CD8-positive, alpha-beta T cell (primary cell): ENCODE measurements at regions of chr7 and their contacts with region 1.

Region 1: GRCh38 chr7:93476491-93477344 is 97.8 kb downstream of the CALCR start:
- DNase-seq: no peak
- ATAC-seq: no peak
- H3K4me3 ChIP-seq: no peak overlapping the region
- H3K4me3 Mint-ChIP-seq: no peak overlapping the region
- H3K27ac ChIP-seq: no peak overlapping the region
- H3K27ac Mint-ChIP-seq: no peak overlapping the region
- H3K4me1 ChIP-seq: no peaks in the 10 kb centered on the region
- H3K4me1 Mint-ChIP-seq: no peaks in the 10 kb centered on the region
- H3K27me3 ChIP-seq: no peaks in the 10 kb centered on the region
- H3K27me3 Mint-ChIP-seq: no peaks in the 10 kb centered on the region
- CTCF ChIP-seq: no peak

Region 2: GRCh38 chr7:93544691-93545090 is 68.0 kb after region 1 on chr7:
- CTCF ChIA-PET with region 1: no interaction called
- POLR2A ChIA-PET with region 1: no interaction called
- intact Hi-C with region 1: no loop called
- DNase-seq: no peak
- ATAC-seq: no peak
- H3K4me3 ChIP-seq: no peak overlapping the region
- H3K4me3 Mint-ChIP-seq: no peak overlapping the region
- H3K27ac ChIP-seq: no peak overlapping the region
- H3K27ac Mint-ChIP-seq: no peak overlapping the region
- H3K4me1 ChIP-seq: no peaks in the 10 kb centered on the region
- H3K4me1 Mint-ChIP-seq: no peaks in the 10 kb centered on the region
- H3K27me3 ChIP-seq: no peaks in the 10 kb centered on the region
- H3K27me3 Mint-ChIP-seq: no peaks in the 10 kb centered on the region
- CTCF ChIP-seq: no peak

Region 3: GRCh38 chr7:95295399-95295798 is 1818.7 kb after region 1 on chr7:
- CTCF ChIA-PET with region 1: no interaction called
- POLR2A ChIA-PET with region 1: no interaction called
- intact Hi-C with region 1: loop called in 1 of 2 experiments (anchors 10 kb)
- DNase-seq: no peak
- ATAC-seq: no peak
- H3K4me3 ChIP-seq: no peak overlapping the region
- H3K4me3 Mint-ChIP-seq: no peak overlapping the region
- H3K27ac ChIP-seq: no peak overlapping the region
- H3K27ac Mint-ChIP-seq: no peak overlapping the region
- H3K4me1 ChIP-seq: no peaks in the 10 kb centered on the region
- H3K4me1 Mint-ChIP-seq: no peaks in the 10 kb centered on the region
- H3K27me3 ChIP-seq: no peaks in the 10 kb centered on the region
- H3K27me3 Mint-ChIP-seq: peaks cover 5% of the 10 kb centered on the region
- CTCF ChIP-seq: no peak